ENCODE measurements at regions of chr6 and their contacts with region 1.

Region 1: GRCh38 chr6:28838634-28839442 is 84.9 kb downstream of the TRIM27 start:
- DNase-seq: peak; percentile 69 to 78 (median 74)
- ATAC-seq: peak; percentile 64
- H3K4me3 ChIP-seq: peak overlapping the region; percentile 29 to 51
- H3K27ac ChIP-seq: peak overlapping the region; percentile 18 to 54 (median 31)
- H3K4me1 ChIP-seq: peaks cover 12% of the 10 kb centered on the region
- H3K27me3 ChIP-seq: peaks cover 0 to 7% of the 10 kb centered on the region in 2 donors
- CTCF ChIP-seq: peak; percentile 16 to 54 (median 43)
- POLR2A ChIP-seq: no peak

Region 2: GRCh38 chr6:28523241-28523622 is 315.6 kb before region 1 on chr6:
- intact Hi-C with region 1: no loop called
- DNase-seq: no peak
- ATAC-seq: no peak
- H3K4me3 ChIP-seq: no peak overlapping the region
- H3K27ac ChIP-seq: no peak overlapping the region
- H3K4me1 ChIP-seq: no peaks in the 10 kb centered on the region
- H3K27me3 ChIP-seq: no peaks in the 10 kb centered on the region
- CTCF ChIP-seq: no peak
- POLR2A ChIP-seq: no peak

Region 3: GRCh38 chr6:29016559-29017427 is 178.0 kb after region 1 on chr6:
- intact Hi-C with region 1: loop called (anchors 5 kb)
- DNase-seq: peak; percentile 78 to 87 (median 84)
- ATAC-seq: peak; percentile 87
- H3K4me3 ChIP-seq: peak overlapping the region in 1 of 2 donors; percentile 24
- H3K27ac ChIP-seq: no peak overlapping the region
- H3K4me1 ChIP-seq: peaks cover 10% of the 10 kb centered on the region
- H3K27me3 ChIP-seq: peaks cover 0 to 7% of the 10 kb centered on the region in 2 donors
- CTCF ChIP-seq: peak; percentile 26 to 87 (median 81)
- POLR2A ChIP-seq: no peak